Aorta (tissue), 5 donors: ENCODE measurements at regions of chr3 and their contacts with region 1.

Region 1: DNA sequence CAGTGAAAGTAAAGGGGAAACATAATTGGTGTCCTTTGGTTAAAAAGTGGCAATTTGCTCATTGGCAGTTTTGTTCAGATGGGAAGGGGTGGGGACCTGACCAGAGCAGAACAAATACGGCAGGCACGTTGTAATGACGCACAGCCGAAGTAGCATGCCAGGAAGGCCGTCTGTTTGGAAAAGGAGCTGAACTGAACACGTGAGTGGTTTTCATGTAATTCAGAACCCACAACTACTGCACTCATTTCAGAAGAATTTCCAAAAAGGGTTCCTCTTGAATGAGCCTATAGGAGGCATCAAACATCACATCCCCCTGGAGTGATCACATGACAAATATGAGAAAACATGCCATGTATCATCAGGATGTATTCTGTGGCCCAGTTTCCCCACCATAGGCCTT is 42.9 kb upstream of the LMCD1 start:
- DNase-seq: peak; percentile 77 to 90
- ATAC-seq: peak; percentile 76
- H3K4me3 ChIP-seq: no peak overlapping the region
- H3K27ac ChIP-seq: peak overlapping the region; percentile 94 to 99
- H3K4me1 ChIP-seq: peaks cover 12 to 19% of the 10 kb centered on the region in 2 donors
- H3K27me3 ChIP-seq: no peaks in the 10 kb centered on the region

Region 2: GRCh38 chr3:8482960-8483665 is 24.4 kb after region 1 on chr3:
- intact Hi-C with region 1: loop called (anchors 2 kb)
- DNase-seq: peak; percentile 91
- ATAC-seq: peak; percentile 86
- H3K4me3 ChIP-seq: no peak overlapping the region
- H3K27ac ChIP-seq: peak overlapping the region; percentile 88 to 100
- H3K4me1 ChIP-seq: peaks cover 3 to 20% of the 10 kb centered on the region in 2 donors
- H3K27me3 ChIP-seq: no peaks in the 10 kb centered on the region

Region 3: DNA sequence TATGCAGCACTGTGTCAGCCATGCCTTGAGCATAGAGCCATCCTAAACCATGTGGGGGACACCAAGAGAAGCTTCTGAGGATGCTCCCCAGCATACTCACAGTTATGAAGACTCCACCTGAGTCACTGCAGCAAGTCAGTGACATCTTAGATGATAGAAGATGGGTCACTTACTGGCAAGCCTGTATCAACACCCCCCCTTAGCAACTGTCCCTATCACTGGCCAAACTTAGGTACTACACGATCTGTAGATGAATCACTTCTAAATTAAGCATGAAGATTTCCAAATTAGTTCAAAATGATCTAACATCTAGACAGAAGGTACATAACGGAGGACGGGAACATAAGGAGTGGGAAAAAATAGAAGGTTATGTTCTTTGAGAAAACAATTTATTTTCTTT is 29.7 kb after region 1 on chr3:
- intact Hi-C with region 1: loop called (anchors 2 kb)
- DNase-seq: no peak
- ATAC-seq: peak; percentile 39
- H3K4me3 ChIP-seq: no peak overlapping the region
- H3K27ac ChIP-seq: peak overlapping the region; percentile 89 to 100
- H3K4me1 ChIP-seq: peaks cover 0 to 14% of the 10 kb centered on the region in 2 donors
- H3K27me3 ChIP-seq: no peaks in the 10 kb centered on the region

Region 4: DNA sequence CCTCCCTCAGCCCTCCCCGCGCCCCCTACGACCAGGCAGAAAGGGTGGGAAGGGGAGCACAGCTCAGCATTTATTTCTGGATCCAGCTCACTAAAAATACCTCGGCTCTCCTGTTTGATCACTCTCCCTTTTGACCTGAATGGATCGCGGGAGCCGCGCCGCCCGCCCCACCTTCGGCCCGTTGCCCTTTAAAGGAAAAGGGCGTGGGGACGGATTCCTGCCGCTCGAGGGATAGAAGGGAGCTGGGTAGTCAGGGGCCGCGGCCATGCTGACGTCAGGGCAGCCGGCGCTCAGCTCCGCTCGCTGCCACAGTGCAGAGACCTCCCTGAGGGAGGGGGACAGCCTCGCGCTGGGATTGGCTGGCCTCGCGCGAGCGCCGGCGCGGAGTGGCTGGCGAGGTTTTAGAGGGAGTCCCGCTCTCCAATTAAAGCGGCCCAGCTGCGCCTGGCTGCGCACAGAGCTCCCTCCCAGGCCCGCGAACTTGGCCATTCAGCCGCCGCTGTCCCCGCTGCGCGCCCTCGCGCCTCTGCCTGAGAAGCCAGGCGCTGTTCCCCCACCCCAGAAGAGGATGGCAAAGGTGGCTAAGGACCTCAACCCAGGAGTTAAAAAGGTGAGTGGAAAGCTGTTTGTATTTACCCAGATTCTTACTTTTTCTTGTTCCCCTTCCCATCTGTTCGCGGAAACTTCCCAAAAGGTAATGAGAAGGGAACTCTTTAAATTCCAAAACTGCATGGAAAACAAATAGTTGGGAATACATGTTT is 42.8 kb after region 1 on chr3 and contains the start of gene LMCD1:
- intact Hi-C with region 1: loop called (anchors 5 kb)
- DNase-seq: peak; percentile 98
- ATAC-seq: peak; percentile 97
- H3K4me3 ChIP-seq: peak within 1 kb of the TSS; percentile 90 to 92
- H3K27ac ChIP-seq: peak within 1 kb of the TSS; percentile 83 to 90
- H3K4me1 ChIP-seq: no peaks in the 10 kb centered on the region
- H3K27me3 ChIP-seq: no peaks in the 10 kb centered on the region
- total RNA-seq, gene LMCD1: 192 to 1,289 TPM